Dendritic cell treated with granulocyte-macrophage colony-stimulating factor and Interleukin-4, amounts not matched to agents 40 ng/mL and 50 ng/mL, for 4 days (primary cell): ENCODE measurements at regions of chr3 and their contacts with region 1.

Region 1: GRCh38 chr3:98817547-98818041 is 54.5 kb downstream of the ST3GAL6 start:
- H3K4me3 Mint-ChIP-seq: no peak overlapping the region
- H3K27ac Mint-ChIP-seq: no peak overlapping the region
- H3K4me1 Mint-ChIP-seq: no peaks in the 10 kb centered on the region
- H3K27me3 Mint-ChIP-seq: no peaks in the 10 kb centered on the region

Region 2: GRCh38 chr3:98343647-98344507 is 473.7 kb before region 1 on chr3:
- intact Hi-C with region 1: loop called (anchors 10 kb)
- H3K4me3 Mint-ChIP-seq: no peak overlapping the region
- H3K27ac Mint-ChIP-seq: no peak overlapping the region
- H3K4me1 Mint-ChIP-seq: no peaks in the 10 kb centered on the region
- H3K27me3 Mint-ChIP-seq: peaks cover 4% of the 10 kb centered on the region

Region 3: GRCh38 chr3:98593046-98593936 is 224.3 kb before region 1 on chr3 and contains the start of gene CPOX:
- intact Hi-C with region 1: loop called (anchors 1 kb)
- H3K4me3 Mint-ChIP-seq: peak within 1 kb of the TSS; percentile 97
- H3K27ac Mint-ChIP-seq: peak within 1 kb of the TSS; percentile 82
- H3K4me1 Mint-ChIP-seq: peaks cover 60% of the 10 kb centered on the region
- H3K27me3 Mint-ChIP-seq: no peaks in the 10 kb centered on the region

Region 4: DNA sequence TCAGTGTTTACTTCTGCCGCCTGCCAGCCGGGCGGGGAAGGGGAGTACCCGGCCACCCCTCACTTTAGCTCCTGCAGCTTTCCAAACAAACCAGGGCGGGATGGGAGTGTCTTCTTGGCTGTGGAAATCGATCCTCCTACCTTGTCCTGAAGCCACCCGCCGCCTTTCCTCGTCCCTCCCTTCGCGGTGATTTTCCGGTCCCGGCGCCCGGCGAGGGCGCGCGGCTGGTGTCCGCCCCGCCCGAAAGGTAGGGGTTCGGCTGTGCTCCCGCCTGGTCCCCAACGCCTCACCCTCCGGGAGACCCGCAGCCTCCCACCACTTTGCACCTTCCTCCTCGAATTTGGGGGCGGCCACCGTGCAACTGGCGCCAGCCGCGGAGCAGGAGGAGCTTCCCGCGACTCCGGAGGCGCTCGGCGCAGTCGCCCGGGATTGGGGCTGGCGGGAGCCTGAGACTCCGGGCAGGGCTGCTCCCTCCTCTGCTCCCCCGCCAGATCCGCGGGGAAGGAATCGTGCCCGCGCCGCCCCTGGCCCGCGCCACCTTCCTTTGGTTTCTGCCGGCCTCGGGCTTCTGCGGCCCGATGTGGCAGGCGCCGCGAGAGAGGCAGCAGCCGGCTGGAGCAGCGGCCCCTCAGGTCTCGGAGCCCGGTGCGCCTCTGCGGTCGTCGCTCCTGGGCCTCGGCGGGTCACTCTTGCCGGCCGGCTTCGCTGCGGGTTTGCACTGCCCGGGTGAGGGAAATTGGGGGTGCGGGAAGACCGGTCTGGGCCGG is 85.1 kb before region 1 on chr3:
- intact Hi-C with region 1: loop called (anchors 5 kb)
- H3K4me3 Mint-ChIP-seq: peak overlapping the region; percentile 96
- H3K27ac Mint-ChIP-seq: peak overlapping the region; percentile 92
- H3K4me1 Mint-ChIP-seq: peaks cover 54% of the 10 kb centered on the region
- H3K27me3 Mint-ChIP-seq: peaks cover 1% of the 10 kb centered on the region

Region 5: GRCh38 chr3:98786364-98787006 is 31.1 kb before region 1 on chr3:
- intact Hi-C with region 1: no loop called
- H3K4me3 Mint-ChIP-seq: no peak overlapping the region
- H3K27ac Mint-ChIP-seq: no peak overlapping the region
- H3K4me1 Mint-ChIP-seq: peaks cover 39% of the 10 kb centered on the region
- H3K27me3 Mint-ChIP-seq: no peaks in the 10 kb centered on the region

Region 6: DNA sequence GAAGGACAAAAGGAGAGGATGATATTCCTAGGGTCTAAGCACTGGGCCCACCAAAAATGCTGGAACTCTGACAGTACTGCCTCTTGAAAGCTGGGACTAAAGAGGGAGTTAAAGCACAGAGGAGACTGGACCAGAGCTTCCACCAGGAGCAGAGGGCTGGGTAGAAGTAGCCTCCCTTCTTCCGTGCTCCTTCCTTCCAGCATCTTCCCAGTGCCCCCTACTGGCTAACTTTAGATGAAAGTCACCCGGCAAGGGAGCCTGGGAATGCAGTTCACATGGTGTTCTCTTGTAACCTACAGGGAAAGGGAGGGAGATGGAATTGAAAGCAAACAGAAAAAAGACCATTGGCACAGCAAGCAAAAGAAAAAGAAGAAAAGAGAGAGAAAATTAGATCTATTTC is 714.7 kb after region 1 on chr3:
- intact Hi-C with region 1: loop called (anchors 5 kb)
- H3K4me3 Mint-ChIP-seq: no peak overlapping the region
- H3K27ac Mint-ChIP-seq: no peak overlapping the region
- H3K4me1 Mint-ChIP-seq: peaks cover 12% of the 10 kb centered on the region
- H3K27me3 Mint-ChIP-seq: no peaks in the 10 kb centered on the region